ENCODE measurements at regions of chr12 and their contacts with region 1.

Region 1: GRCh38 chr12:53267999-53268647 is at the start of gene ESPL1:
- DNase-seq: peak; percentile 82
- H3K4me3 ChIP-seq: peak within 1 kb of the TSS; percentile 61 to 85 (median 77)
- H3K27ac ChIP-seq: no peak within 1 kb of the TSS
- H3K4me1 ChIP-seq: peaks cover 24% of the 10 kb centered on the region
- H3K27me3 ChIP-seq: no peaks in the 10 kb centered on the region
- CTCF ChIP-seq: peak; percentile 35 to 51
- POLR2A ChIP-seq: peak; percentile 15
- total RNA-seq, gene ESPL1: 39.3 and 42.7 TPM in 2 replicates

Region 2: GRCh38 chr12:53251477-53252348 is 16.4 kb before region 1 on chr12:
- CTCF ChIA-PET with region 1: interaction called, 7 read pairs
- POLR2A ChIA-PET with region 1: no interaction called
- dilution Hi-C with region 1: no loop called
- intact Hi-C with region 1: loop called (anchors 2 kb)
- DNase-seq: peak; percentile 74
- H3K4me3 ChIP-seq: peak overlapping the region; percentile 78 to 97 (median 84)
- H3K27ac ChIP-seq: peak overlapping the region; percentile 40
- H3K4me1 ChIP-seq: peaks cover 14% of the 10 kb centered on the region
- H3K27me3 ChIP-seq: no peaks in the 10 kb centered on the region
- CTCF ChIP-seq: peak; percentile 23 to 54
- POLR2A ChIP-seq: peak; percentile 83

Region 3: GRCh38 chr12:53287741-53288216 is 19.7 kb after region 1 on chr12:
- CTCF ChIA-PET with region 1: interaction called, 17 read pairs
- POLR2A ChIA-PET with region 1: no interaction called
- dilution Hi-C with region 1: no loop called
- intact Hi-C with region 1: no loop called
- DNase-seq: peak; percentile 66
- H3K4me3 ChIP-seq: no peak overlapping the region
- H3K27ac ChIP-seq: no peak overlapping the region
- H3K4me1 ChIP-seq: peaks cover 17% of the 10 kb centered on the region
- H3K27me3 ChIP-seq: no peaks in the 10 kb centered on the region
- CTCF ChIP-seq: peak; percentile 45 to 65
- POLR2A ChIP-seq: no peak

Region 4: GRCh38 chr12:53295070-53295890 is 27.2 kb after region 1 on chr12 and contains the start of gene PFDN5:
- CTCF ChIA-PET with region 1: interaction called, 3 read pairs
- POLR2A ChIA-PET with region 1: interaction called, 4 read pairs
- dilution Hi-C with region 1: no loop called
- intact Hi-C with region 1: loop called (anchors 2 kb)
- DNase-seq: peak; percentile 96
- H3K4me3 ChIP-seq: peak within 1 kb of the TSS; percentile 71 to 82 (median 82)
- H3K27ac ChIP-seq: peak within 1 kb of the TSS; percentile 63
- H3K4me1 ChIP-seq: peaks cover 31% of the 10 kb centered on the region
- H3K27me3 ChIP-seq: no peaks in the 10 kb centered on the region
- CTCF ChIP-seq: no peak
- POLR2A ChIP-seq: peak; percentile 84
- total RNA-seq, gene PFDN5: 286 and 301 TPM in 2 replicates

Region 5: DNA sequence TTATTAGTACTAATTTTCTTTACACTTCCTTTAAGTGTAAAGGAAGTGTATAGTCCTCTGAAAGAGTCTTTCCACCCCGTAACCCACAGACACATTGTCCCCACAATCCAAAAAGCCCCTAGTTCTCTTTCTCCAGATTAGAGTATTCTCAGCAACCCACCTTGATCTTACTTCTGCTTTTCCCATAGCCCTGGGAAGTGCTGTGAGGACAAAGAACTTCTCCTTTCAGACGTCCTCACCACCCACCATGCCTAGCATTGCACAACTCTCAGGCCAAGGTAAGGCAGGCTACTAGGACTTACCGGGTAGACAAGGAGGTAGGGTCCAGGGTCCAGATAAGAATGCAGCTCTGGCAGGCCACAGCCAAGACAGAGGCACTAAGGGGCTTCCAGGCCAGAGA is 45.9 kb after region 1 on chr12:
- CTCF ChIA-PET with region 1: no interaction called
- POLR2A ChIA-PET with region 1: no interaction called
- dilution Hi-C with region 1: no loop called
- intact Hi-C with region 1: no loop called
- DNase-seq: no peak
- H3K4me3 ChIP-seq: no peak overlapping the region
- H3K27ac ChIP-seq: no peak overlapping the region
- H3K4me1 ChIP-seq: no peaks in the 10 kb centered on the region
- H3K27me3 ChIP-seq: no peaks in the 10 kb centered on the region
- CTCF ChIP-seq: no peak
- POLR2A ChIP-seq: no peak

Region 6: GRCh38 chr12:53355121-53355520 is 87.0 kb after region 1 on chr12:
- CTCF ChIA-PET with region 1: no interaction called
- POLR2A ChIA-PET with region 1: no interaction called
- dilution Hi-C with region 1: no loop called
- intact Hi-C with region 1: no loop called
- DNase-seq: no peak
- H3K4me3 ChIP-seq: no peak overlapping the region
- H3K27ac ChIP-seq: no peak overlapping the region
- H3K4me1 ChIP-seq: peaks cover 2% of the 10 kb centered on the region
- H3K27me3 ChIP-seq: no peaks in the 10 kb centered on the region
- CTCF ChIP-seq: no peak
- POLR2A ChIP-seq: no peak

Region 7: GRCh38 chr12:53907103-53907502 is 639.0 kb after region 1 on chr12:
- CTCF ChIA-PET with region 1: no interaction called
- POLR2A ChIA-PET with region 1: no interaction called
- dilution Hi-C with region 1: no loop called
- intact Hi-C with region 1: no loop called
- DNase-seq: no peak
- H3K4me3 ChIP-seq: no peak overlapping the region
- H3K27ac ChIP-seq: no peak overlapping the region
- H3K4me1 ChIP-seq: no peaks in the 10 kb centered on the region
- H3K27me3 ChIP-seq: peaks cover 5 to 12% of the 10 kb centered on the region in 2 experiments
- CTCF ChIP-seq: no peak
- POLR2A ChIP-seq: no peak

Measured in endothelial cell of umbilical vein (primary cell).